Activated T-helper 2 cell treated with anti-CD3 and anti-CD28 coated beads, Interferon-gamma antibody, Interleukin-2, Interleukin-4, amounts not matched to agents 10 μg/mL and 5 μg/mL and 100 μg/mL, durations not matched to agents 14 hours and 24 hours and 36 hours (primary cell): ENCODE measurements at regions of chr15 and their contacts with region 1.

Region 1: GRCh38 chr15:51982013-51982769 is 10.6 kb upstream of the LEO1 start:
- DNase-seq: peak; percentile 84
- H3K4me3 Mint-ChIP-seq: peak overlapping the region; percentile 77
- H3K27ac Mint-ChIP-seq: peak overlapping the region; percentile 88
- H3K4me1 Mint-ChIP-seq: peaks cover 33% of the 10 kb centered on the region
- H3K27me3 Mint-ChIP-seq: no peaks in the 10 kb centered on the region

Region 2: DNA sequence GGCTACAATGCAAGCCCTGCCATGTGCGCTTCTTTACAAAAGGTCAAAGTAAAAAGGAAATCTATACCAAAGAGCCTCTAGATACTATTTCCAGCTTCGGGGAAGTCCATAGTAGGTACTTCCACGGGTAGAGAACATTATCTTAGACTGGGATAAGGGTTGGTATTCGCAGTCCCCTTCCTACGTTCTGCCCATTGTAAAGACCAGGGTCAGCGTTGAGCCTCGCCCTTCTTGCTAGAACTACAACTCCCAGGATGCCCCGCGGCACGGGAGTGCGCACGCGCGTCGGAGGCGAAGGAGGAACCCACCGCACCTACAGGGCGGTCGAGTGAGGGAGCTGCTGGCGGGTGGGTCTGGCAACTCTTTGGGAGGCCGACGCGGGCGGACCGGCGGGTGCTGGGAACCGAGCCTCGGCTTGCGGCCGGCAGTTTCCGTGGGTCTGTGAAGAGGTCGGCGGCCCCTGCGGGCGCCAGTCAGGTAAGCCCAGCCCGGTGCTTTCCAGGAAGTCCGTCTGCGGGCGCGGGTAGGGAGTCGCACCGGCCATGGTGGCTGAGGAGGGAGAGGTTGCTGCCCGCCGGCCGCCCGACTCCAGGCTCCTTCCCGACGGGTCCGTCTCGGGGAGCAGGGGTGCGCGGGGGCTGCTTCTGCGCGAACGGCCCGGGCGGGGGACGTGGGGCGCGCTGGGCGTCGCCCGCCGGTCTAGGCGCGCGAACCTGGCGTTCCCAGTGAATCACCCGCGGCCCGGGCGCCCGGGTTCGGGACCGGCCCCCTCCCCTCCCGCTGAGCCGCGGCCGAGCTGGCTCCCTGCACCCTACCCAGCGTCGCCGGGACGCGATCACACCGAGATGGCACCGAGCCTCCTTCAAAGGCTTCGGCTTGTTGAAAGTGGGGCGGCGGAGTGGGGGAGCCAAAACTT is 152.6 kb before region 1 on chr15 and contains the start of gene TMOD3:
- intact Hi-C with region 1: loop called (anchors 10 kb)
- DNase-seq: peak; percentile 86
- H3K4me3 Mint-ChIP-seq: peak within 1 kb of the TSS; percentile 93
- H3K27ac Mint-ChIP-seq: peak within 1 kb of the TSS; percentile 94
- H3K4me1 Mint-ChIP-seq: peaks cover 37% of the 10 kb centered on the region
- H3K27me3 Mint-ChIP-seq: peaks cover 17% of the 10 kb centered on the region
- total RNA-seq, gene TMOD3: 64.3 and 66.0 TPM in 2 replicates

Region 3: DNA sequence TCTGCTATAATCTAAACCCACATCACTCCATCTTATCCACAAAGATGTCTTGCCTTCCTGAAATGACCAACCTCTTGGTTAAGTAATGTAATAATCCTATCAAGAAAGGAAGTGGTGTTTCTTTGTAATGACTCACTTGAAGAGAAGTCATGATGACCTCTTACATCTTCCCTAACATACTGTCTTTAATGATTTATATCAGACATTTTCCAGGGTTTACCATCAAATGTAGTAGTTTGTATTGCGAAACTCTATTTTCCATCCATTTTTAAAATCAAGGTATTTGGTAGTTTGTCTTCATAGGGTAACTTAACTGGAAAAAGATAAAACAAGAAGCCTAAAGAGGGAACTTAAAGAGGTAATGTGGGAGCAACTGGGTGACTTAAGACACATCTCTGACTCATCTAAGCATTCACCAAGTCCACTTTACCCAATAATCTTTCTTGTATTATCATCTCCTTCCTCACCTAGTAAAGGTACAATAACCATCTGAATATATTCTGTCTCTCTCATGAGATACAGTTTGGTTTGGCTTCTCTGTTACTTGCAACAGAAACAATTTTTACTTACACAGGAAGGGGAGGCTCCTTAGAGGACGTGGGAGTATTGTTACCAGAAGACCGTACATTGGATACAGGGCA is 31.1 kb after region 1 on chr15:
- intact Hi-C with region 1: loop called (anchors 1 kb)
- DNase-seq: no peak
- H3K4me3 Mint-ChIP-seq: no peak overlapping the region
- H3K27ac Mint-ChIP-seq: peak overlapping the region; percentile 88
- H3K4me1 Mint-ChIP-seq: peaks cover 51% of the 10 kb centered on the region
- H3K27me3 Mint-ChIP-seq: no peaks in the 10 kb centered on the region

Region 4: DNA sequence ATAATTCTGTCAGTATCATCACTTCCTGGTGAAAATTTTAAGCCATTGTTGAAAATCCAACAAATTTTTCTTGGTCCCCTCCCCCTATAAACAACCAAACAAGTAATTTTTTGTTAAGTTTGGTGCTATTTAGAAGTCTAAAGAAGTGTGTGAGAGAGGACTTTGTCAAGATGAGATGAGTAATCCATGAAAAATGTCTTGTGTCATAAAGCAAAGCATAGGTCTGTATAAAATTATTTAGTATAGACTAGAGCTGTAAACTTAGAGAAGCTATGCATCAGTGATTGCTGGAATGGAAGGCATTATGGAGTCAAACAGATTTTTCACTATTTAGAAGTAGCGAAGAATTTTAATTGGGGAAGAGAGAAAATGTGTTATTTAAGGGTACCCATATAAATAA is 68.2 kb after region 1 on chr15:
- intact Hi-C with region 1: loop called (anchors 1 kb)
- DNase-seq: no peak
- H3K4me3 Mint-ChIP-seq: no peak overlapping the region
- H3K27ac Mint-ChIP-seq: no peak overlapping the region
- H3K4me1 Mint-ChIP-seq: peaks cover 24% of the 10 kb centered on the region
- H3K27me3 Mint-ChIP-seq: no peaks in the 10 kb centered on the region

Region 5: DNA sequence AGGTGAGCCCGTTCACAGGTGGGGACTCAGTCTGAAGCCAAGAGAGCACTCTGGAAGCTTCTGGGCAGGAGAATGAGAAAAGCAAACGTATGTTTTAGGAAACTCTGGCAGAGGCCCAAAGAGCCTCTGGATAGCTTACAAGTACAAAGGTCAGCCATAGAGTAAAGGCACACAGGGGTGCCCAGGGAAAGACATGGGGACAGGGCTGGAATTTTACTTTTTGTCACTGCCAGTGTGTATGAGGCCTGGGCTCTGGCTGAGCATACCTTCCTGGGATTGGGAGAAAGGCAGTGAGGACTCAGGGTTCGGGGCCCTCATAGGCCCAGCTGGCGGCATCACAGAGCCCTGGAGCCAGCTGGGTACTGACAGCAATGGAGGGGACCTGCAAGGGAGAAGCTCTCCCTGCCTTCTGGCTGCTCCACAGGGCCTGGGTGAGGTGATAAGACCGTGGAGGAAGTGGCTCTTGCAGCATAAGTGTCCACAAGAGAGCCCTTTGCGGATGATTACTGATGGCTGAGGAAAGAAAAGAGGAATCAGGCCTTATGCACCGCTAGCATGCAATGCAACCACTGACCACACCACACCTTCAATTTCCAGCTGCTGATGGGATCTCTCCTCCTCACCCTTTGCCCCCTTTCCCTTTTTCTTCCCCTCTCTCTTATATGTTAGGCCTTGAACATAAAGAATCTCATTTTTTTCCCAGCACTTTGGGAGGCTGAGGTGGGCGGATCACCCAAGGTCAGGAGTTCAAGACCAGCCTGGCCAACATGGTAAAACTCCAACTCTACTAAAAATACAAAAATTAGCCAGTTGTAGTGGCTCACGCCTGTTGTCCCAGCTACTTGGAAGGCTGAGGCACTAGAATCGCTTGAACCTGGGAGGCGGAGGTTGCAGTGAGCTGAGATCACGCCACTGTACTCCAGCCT is 155.5 kb after region 1 on chr15:
- intact Hi-C with region 1: loop called (anchors 1 kb)
- DNase-seq: no peak
- H3K4me3 Mint-ChIP-seq: no peak overlapping the region
- H3K27ac Mint-ChIP-seq: no peak overlapping the region
- H3K4me1 Mint-ChIP-seq: peaks cover 20% of the 10 kb centered on the region
- H3K27me3 Mint-ChIP-seq: no peaks in the 10 kb centered on the region